ENCODE measurements at regions of chr11 and their contacts with region 1.

Region 1: DNA sequence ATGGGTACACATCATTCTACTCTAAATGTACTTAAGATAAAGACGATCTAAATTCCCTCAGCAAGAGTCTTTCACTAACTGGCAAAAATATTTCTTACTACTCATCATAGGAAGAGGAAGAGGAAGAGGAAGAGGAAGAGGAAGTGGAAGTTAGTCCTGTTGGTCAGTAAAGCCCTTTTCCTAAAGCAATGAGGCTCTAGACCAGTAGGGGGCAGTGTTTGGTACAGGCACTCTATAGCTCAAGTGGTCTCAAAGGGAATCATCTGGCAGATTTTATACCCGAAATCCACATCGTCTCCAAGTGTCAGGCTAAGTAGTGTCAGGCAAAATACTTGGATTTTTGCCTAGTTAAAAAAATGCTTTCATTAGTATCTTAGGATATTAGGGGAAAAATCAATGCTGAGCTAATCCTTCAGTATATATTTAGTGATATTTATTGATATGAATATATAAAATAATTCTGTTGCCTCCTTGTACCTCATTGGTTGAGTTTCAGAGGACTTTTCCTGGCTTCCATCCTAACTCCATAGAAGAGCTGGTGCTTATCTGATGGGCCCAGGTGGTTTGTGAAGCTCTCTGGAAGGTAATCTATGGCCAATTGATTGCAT is 7.7 kb downstream of the BLID start:
- DNase-seq: peak; percentile 81
- H3K4me3 ChIP-seq: no peak overlapping the region
- H3K27ac ChIP-seq: peak overlapping the region; percentile 8 to 71
- H3K4me1 ChIP-seq: no peaks in the 10 kb centered on the region
- H3K27me3 ChIP-seq: no peaks in the 10 kb centered on the region
- CTCF ChIP-seq: peak; percentile 51 to 79 (median 72)
- POLR2A ChIP-seq: no peak

Region 2: DNA sequence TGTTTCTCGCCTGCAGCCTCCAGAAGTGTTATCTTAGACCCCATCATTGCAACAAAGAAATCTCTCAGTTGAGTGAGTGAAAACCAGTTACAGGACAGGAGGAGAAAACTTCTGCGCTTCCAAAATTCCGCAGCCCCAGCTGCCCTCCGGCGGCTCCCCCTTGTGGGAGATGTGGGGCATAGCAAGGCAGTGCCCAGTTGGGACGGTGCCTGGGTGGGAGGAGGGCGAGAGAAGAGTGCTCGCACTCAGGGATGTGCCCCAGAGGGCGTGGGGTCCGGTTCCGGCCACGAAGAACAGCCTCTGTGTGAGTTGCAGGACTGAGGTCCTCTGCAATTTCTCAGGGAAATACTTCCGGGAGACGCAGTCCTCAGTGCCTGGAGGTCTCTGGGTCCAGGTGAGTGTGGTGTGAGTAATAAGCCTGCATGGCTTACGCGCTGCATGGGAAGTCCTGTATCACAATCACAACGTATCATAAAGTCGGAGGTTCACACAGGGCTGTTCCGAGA is 94.7 kb after region 1 on chr11:
- intact Hi-C with region 1: loop called (anchors 10 kb)
- DNase-seq: peak; percentile 79
- H3K4me3 ChIP-seq: peak overlapping the region; percentile 34 to 55
- H3K27ac ChIP-seq: peak overlapping the region; percentile 64 to 85
- H3K4me1 ChIP-seq: peaks cover 45% of the 10 kb centered on the region
- H3K27me3 ChIP-seq: no peaks in the 10 kb centered on the region
- CTCF ChIP-seq: peak; percentile 86 to 98 (median 97)
- POLR2A ChIP-seq: no peak

Measured in testis (tissue), 5 donors.